ENCODE measurements at regions of chr10 and their contacts with region 1.

Region 1: DNA sequence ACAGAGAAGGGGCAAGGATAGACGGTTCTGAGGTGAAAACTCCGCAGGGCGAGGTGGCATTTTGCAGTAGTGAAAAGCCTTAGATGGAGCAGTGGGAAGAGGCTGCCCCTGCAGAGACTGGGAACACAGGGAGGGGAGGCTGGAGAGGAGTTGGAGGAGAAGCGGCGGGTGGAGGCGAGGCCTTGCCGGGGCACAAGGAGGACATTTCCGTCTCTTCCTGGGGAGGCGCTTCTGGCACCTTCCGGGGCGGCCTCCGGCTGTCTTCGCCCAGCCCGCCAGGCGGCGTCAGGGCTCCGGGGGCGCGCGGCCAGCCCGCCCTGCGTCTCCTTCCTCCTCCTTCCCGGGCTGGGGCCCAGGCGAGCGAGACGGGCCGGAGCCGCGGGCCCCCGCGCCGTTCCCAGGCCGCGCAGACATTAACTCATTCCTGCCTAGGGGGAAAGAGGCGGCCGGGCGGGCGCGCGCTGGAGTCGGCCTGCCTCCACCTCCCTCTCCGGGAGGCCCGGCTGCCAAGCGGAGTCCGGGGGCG is 42.7 kb downstream of the LDB3 start:
- DNase-seq: peak; percentile 92 to 95
- ATAC-seq: peak; percentile 81 to 84 (median 82)
- H3K4me3 ChIP-seq: peak overlapping the region; percentile 80
- H3K27ac ChIP-seq: peak overlapping the region; percentile 98
- H3K4me1 ChIP-seq: peaks cover 52% of the 10 kb centered on the region
- H3K27me3 ChIP-seq: no peaks in the 10 kb centered on the region
- CTCF ChIP-seq: peak; percentile 82

Region 2: DNA sequence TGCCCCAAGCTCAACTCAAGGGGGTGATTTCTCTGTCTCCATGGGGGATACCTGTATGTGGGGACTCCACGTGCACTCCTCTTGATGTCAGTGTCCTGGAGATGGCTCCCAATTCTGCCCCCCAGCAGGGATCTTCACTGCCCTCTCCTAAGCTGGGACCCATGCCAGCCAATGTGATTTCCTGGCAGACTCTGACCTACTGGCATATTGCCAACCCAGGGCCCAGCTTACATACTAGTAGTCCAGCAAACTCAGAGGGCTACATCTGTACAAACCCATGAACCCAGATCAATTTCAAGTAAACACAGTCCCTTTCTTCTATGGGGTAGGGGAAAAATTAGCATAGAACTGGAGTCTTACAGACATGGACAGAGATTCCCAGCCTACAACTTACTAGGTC is 19.2 kb after region 1 on chr10:
- intact Hi-C with region 1: loop called (anchors 2 kb)
- DNase-seq: peak in 1 of 2 donors; percentile 67
- ATAC-seq: peak in 1 of 4 donors; percentile 21
- H3K4me3 ChIP-seq: no peak overlapping the region
- H3K27ac ChIP-seq: peak overlapping the region; percentile 86
- H3K4me1 ChIP-seq: peaks cover 67% of the 10 kb centered on the region
- H3K27me3 ChIP-seq: no peaks in the 10 kb centered on the region
- CTCF ChIP-seq: no peak

Region 3: GRCh38 chr10:86755740-86756510 is 44.9 kb after region 1 on chr10:
- intact Hi-C with region 1: loop called in 1 of 2 experiments (anchors 5 kb)
- DNase-seq: peak; percentile 93
- ATAC-seq: peak; percentile 83 to 88 (median 86)
- H3K4me3 ChIP-seq: peak overlapping the region; percentile 92
- H3K27ac ChIP-seq: peak overlapping the region; percentile 100
- H3K4me1 ChIP-seq: peaks cover 44% of the 10 kb centered on the region
- H3K27me3 ChIP-seq: no peaks in the 10 kb centered on the region
- CTCF ChIP-seq: no peak

Region 4: GRCh38 chr10:86899670-86900276 is 188.7 kb after region 1 on chr10:
- intact Hi-C with region 1: loop called (anchors 1 to 2 kb)
- DNase-seq: peak in 1 of 2 donors; percentile 31
- ATAC-seq: peak; percentile 69 to 84 (median 72)
- H3K4me3 ChIP-seq: no peak overlapping the region
- H3K27ac ChIP-seq: no peak overlapping the region
- H3K4me1 ChIP-seq: peaks cover 21% of the 10 kb centered on the region
- H3K27me3 ChIP-seq: no peaks in the 10 kb centered on the region
- CTCF ChIP-seq: peak; percentile 77

Region 5: GRCh38 chr10:88152720-88153119 is 1441.7 kb after region 1 on chr10:
- intact Hi-C with region 1: no loop called
- DNase-seq: peak in 1 of 2 donors; percentile 19
- ATAC-seq: peak; percentile 82 to 91 (median 87)
- H3K4me3 ChIP-seq: no peak overlapping the region
- H3K27ac ChIP-seq: peak overlapping the region; percentile 38
- H3K4me1 ChIP-seq: peaks cover 24% of the 10 kb centered on the region
- H3K27me3 ChIP-seq: no peaks in the 10 kb centered on the region
- CTCF ChIP-seq: no peak

Measured in psoas muscle (tissue), 8 donors.